ENCODE measurements at regions of chr19 and their contacts with region 1.

Region 1: GRCh38 chr19:33778089-33778791 is 18.4 kb upstream of the KCTD15 start:
- DNase-seq: peak; percentile 86
- H3K4me3 Mint-ChIP-seq: no peak overlapping the region
- H3K27ac Mint-ChIP-seq: no peak overlapping the region
- H3K4me1 Mint-ChIP-seq: peaks cover 5% of the 10 kb centered on the region
- H3K27me3 Mint-ChIP-seq: peaks cover 25% of the 10 kb centered on the region

Region 2: GRCh38 chr19:32914879-32915660 is 863.2 kb before region 1 on chr19:
- CTCF ChIA-PET with region 1: no interaction called
- intact Hi-C with region 1: no loop called
- DNase-seq: no peak
- H3K4me3 Mint-ChIP-seq: no peak overlapping the region
- H3K27ac Mint-ChIP-seq: no peak overlapping the region
- H3K4me1 Mint-ChIP-seq: no peaks in the 10 kb centered on the region
- H3K27me3 Mint-ChIP-seq: no peaks in the 10 kb centered on the region

Region 3: DNA sequence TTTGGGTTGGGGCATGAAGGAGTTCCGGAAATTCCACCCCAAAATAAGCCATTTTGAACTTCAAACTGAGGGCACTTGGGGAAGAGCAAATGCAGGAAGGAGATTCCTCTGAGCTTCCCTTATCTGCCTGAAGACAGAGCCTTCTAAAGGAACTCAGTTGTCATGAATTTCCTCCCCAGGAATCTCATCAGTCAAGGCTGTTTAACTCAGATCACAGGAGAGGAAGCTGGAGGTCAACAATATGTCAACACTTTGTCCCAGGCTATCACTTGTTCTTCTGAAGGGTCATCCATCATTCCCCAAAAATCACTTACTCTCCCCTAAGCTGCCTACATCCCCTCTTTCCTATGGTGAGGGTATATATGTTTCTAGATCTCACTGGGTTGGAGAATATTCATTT is 182.5 kb before region 1 on chr19:
- CTCF ChIA-PET with region 1: no interaction called
- intact Hi-C with region 1: no loop called
- DNase-seq: no peak
- H3K4me3 Mint-ChIP-seq: no peak overlapping the region
- H3K27ac Mint-ChIP-seq: no peak overlapping the region
- H3K4me1 Mint-ChIP-seq: no peaks in the 10 kb centered on the region
- H3K27me3 Mint-ChIP-seq: peaks cover 14% of the 10 kb centered on the region

Region 4: DNA sequence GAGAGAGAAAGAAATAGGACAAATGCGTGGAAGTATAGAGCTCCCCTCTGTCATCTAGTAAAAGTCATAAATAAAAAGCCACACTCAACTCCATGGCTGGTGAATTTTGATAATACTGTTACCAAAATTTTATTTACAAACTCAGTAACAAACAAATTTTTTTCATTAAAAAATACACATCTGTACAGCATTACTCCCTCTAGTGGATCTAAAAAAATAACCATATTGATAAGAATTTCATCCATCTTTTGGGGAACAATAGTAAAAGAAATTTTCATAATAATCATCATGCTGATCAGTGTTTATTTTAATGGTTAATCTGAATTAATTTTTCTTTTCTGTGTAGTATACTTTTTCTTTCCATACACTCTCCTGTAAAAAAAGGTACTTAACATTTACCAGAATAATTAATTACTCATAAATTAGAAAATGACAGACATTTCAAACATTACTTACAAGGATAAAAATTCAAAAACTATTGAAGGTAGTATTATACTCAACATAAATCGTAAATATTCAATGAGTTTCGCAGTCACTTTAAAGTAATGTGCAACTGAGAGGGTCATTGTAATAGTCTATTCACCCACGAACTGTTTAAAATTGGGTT is 220.6 kb after region 1 on chr19:
- CTCF ChIA-PET with region 1: interaction called, 21 read pairs
- intact Hi-C with region 1: loop called (anchors 1 kb)
- DNase-seq: no peak
- H3K4me3 Mint-ChIP-seq: no peak overlapping the region
- H3K27ac Mint-ChIP-seq: no peak overlapping the region
- H3K4me1 Mint-ChIP-seq: no peaks in the 10 kb centered on the region
- H3K27me3 Mint-ChIP-seq: peaks cover 19% of the 10 kb centered on the region

Region 5: GRCh38 chr19:34096020-34096915 is 318.0 kb after region 1 on chr19:
- CTCF ChIA-PET with region 1: interaction called, 47 read pairs
- intact Hi-C with region 1: loop called (anchors 1 kb)
- DNase-seq: no peak
- H3K4me3 Mint-ChIP-seq: no peak overlapping the region
- H3K27ac Mint-ChIP-seq: no peak overlapping the region
- H3K4me1 Mint-ChIP-seq: peaks cover 2% of the 10 kb centered on the region
- H3K27me3 Mint-ChIP-seq: peaks cover 4% of the 10 kb centered on the region